Caco-2 (cell line): ENCODE measurements at regions of chr11 and their contacts with region 1.

Region 1: GRCh38 chr11:130002846-130003716 is 446 bp upstream of the PRDM10 start:
- DNase-seq: peak; percentile 99
- H3K4me3 ChIP-seq: peak overlapping the region; percentile 60
- H3K4me3 Mint-ChIP-seq: peak overlapping the region; percentile 97
- H3K27ac Mint-ChIP-seq: peak overlapping the region; percentile 100
- H3K4me1 ChIP-seq: peaks cover 43% of the 10 kb centered on the region
- H3K4me1 Mint-ChIP-seq: peaks cover 35% of the 10 kb centered on the region
- H3K27me3 ChIP-seq: no peaks in the 10 kb centered on the region
- H3K27me3 Mint-ChIP-seq: no peaks in the 10 kb centered on the region
- CTCF ChIP-seq: no peak

Region 2: DNA sequence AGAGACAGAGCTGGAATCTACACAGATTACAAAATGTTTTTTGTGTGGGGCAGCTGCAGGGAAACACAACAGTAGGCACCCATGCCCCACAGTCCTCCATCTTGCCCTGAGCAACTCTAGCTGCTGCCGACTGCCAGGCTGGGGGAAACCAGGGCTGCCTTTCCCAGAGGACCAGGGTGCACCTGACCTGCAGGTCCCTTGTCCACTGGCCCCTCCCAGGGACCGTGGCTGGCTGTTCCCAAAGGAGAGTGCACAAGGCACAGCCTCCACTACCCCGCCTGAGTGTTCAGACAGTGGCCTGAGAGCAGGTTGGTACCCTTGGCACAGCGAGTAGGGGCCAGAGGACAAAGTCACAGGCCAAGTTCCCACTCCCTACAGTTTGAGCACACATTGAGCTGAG is 445.7 kb before region 1 on chr11:
- CTCF ChIA-PET with region 1: no interaction called
- POLR2A ChIA-PET with region 1: no interaction called
- intact Hi-C with region 1: no loop called
- DNase-seq: no peak
- H3K4me3 ChIP-seq: no peak overlapping the region
- H3K4me3 Mint-ChIP-seq: no peak overlapping the region
- H3K27ac Mint-ChIP-seq: no peak overlapping the region
- H3K4me1 ChIP-seq: no peaks in the 10 kb centered on the region
- H3K4me1 Mint-ChIP-seq: no peaks in the 10 kb centered on the region
- H3K27me3 ChIP-seq: no peaks in the 10 kb centered on the region; the same call in 1 of the 2 replicates
- H3K27me3 Mint-ChIP-seq: peaks cover 13% of the 10 kb centered on the region
- CTCF ChIP-seq: no peak

Region 3: GRCh38 chr11:129895126-129896041 is 107.7 kb before region 1 on chr11 and contains the start of gene NFRKB:
- CTCF ChIA-PET with region 1: no interaction called
- POLR2A ChIA-PET with region 1: interaction called, 10 read pairs
- intact Hi-C with region 1: no loop called
- DNase-seq: peak; percentile 94 to 98
- H3K4me3 ChIP-seq: peak within 1 kb of the TSS; percentile 86
- H3K4me3 Mint-ChIP-seq: peak within 1 kb of the TSS; percentile 84
- H3K27ac Mint-ChIP-seq: peak within 1 kb of the TSS; percentile 80
- H3K4me1 ChIP-seq: peaks cover 14% of the 10 kb centered on the region
- H3K4me1 Mint-ChIP-seq: peaks cover 13% of the 10 kb centered on the region
- H3K27me3 ChIP-seq: no peaks in the 10 kb centered on the region
- H3K27me3 Mint-ChIP-seq: no peaks in the 10 kb centered on the region
- CTCF ChIP-seq: no peak
- total RNA-seq, gene NFRKB: 101 and 104 TPM in 2 replicates

Region 4: GRCh38 chr11:129992161-129992944 is 10.7 kb before region 1 on chr11:
- CTCF ChIA-PET with region 1: interaction called, 10 read pairs
- POLR2A ChIA-PET with region 1: interaction called, 14 read pairs
- intact Hi-C with region 1: no loop called
- DNase-seq: peak; percentile 80 to 82
- H3K4me3 ChIP-seq: no peak overlapping the region
- H3K4me3 Mint-ChIP-seq: no peak overlapping the region
- H3K27ac Mint-ChIP-seq: peak overlapping the region; percentile 35
- H3K4me1 ChIP-seq: peaks cover 13% of the 10 kb centered on the region
- H3K4me1 Mint-ChIP-seq: peaks cover 28% of the 10 kb centered on the region
- H3K27me3 ChIP-seq: no peaks in the 10 kb centered on the region
- H3K27me3 Mint-ChIP-seq: no peaks in the 10 kb centered on the region
- CTCF ChIP-seq: peak in 1 of 2 experiments; percentile 84

Region 5: GRCh38 chr11:130055617-130056016 is 52.5 kb after region 1 on chr11:
- CTCF ChIA-PET with region 1: interaction called, 4 read pairs
- POLR2A ChIA-PET with region 1: interaction called, 11 read pairs
- intact Hi-C with region 1: no loop called
- DNase-seq: no peak
- H3K4me3 ChIP-seq: no peak overlapping the region
- H3K4me3 Mint-ChIP-seq: no peak overlapping the region
- H3K27ac Mint-ChIP-seq: no peak overlapping the region
- H3K4me1 ChIP-seq: no peaks in the 10 kb centered on the region
- H3K4me1 Mint-ChIP-seq: no peaks in the 10 kb centered on the region
- H3K27me3 ChIP-seq: no peaks in the 10 kb centered on the region
- H3K27me3 Mint-ChIP-seq: no peaks in the 10 kb centered on the region
- CTCF ChIP-seq: no peak

Region 6: GRCh38 chr11:130131961-130132850 is 129.1 kb after region 1 on chr11:
- CTCF ChIA-PET with region 1: interaction called, 33 read pairs
- POLR2A ChIA-PET with region 1: interaction called, 9 read pairs
- intact Hi-C with region 1: loop called (anchors 1 kb)
- DNase-seq: peak; percentile 75 to 85
- H3K4me3 ChIP-seq: no peak overlapping the region
- H3K4me3 Mint-ChIP-seq: no peak overlapping the region
- H3K27ac Mint-ChIP-seq: peak overlapping the region; percentile 45
- H3K4me1 ChIP-seq: peaks cover 18% of the 10 kb centered on the region
- H3K4me1 Mint-ChIP-seq: peaks cover 25% of the 10 kb centered on the region
- H3K27me3 ChIP-seq: no peaks in the 10 kb centered on the region
- H3K27me3 Mint-ChIP-seq: no peaks in the 10 kb centered on the region
- CTCF ChIP-seq: peak; percentile 90 to 95